K562 (cell line): ENCODE measurements at regions of chr20 and their contacts with region 1.

Region 1: GRCh38 chr20:3218307-3218988 is 9.2 kb downstream of the ITPA start:
- DNase-seq: peak; percentile 70 to 76 (median 74)
- ATAC-seq: peak; percentile 99
- H3K4me3 ChIP-seq: no peak overlapping the region
- H3K27ac ChIP-seq: no peak overlapping the region
- H3K4me1 ChIP-seq: peaks cover 6 to 11% of the 10 kb centered on the region in 2 experiments; a peak in 4 of 5 replicates
- H3K27me3 ChIP-seq: no peaks in the 10 kb centered on the region
- CTCF ChIP-seq: peak; percentile 66 to 88 (median 78)
- EP300 ChIP-seq: no peak
- POLR2A ChIP-seq: no peak
- RAD21 ChIP-seq: peak; percentile 37 to 70; a peak in 3 of 4 replicates

Region 2: DNA sequence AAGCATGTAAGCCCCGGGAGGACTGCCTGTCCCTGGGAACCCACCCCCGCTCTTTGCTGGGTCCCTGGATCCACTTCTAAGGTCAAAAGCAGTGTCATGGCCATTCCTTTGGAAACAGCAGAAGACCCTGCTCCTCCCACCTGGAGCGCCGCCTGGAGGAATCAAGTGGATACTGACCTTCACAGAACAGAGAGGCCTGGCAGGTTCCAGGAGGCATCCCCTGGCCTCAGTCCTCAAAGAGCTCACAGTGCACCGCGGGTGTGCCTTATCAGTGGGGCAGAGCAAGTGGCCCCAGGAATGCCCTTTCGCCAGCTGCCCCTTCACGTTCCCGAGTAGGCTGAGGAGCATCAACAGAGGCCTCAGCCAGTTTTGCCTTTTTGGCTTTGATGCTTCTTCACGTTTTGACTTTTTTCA is 31.6 kb after region 1 on chr20:
- CTCF ChIA-PET with region 1: no interaction called
- POLR2A ChIA-PET with region 1: no interaction called
- in situ Hi-C with region 1: no loop called
- intact Hi-C with region 1: loop called (anchors 1 kb)
- DNase-seq: peak; percentile 47 to 68 (median 60)
- ATAC-seq: peak; percentile 91
- H3K4me3 ChIP-seq: no peak overlapping the region
- H3K27ac ChIP-seq: no peak overlapping the region
- H3K4me1 ChIP-seq: peaks cover 0 to 10% of the 10 kb centered on the region in 2 experiments; a peak in 3 of 5 replicates
- H3K27me3 ChIP-seq: peaks cover 0 to 15% of the 10 kb centered on the region in 2 experiments; a peak in 2 of 5 replicates
- CTCF ChIP-seq: peak; percentile 68 to 75 (median 75)
- EP300 ChIP-seq: no peak
- POLR2A ChIP-seq: no peak
- RAD21 ChIP-seq: peak in 1 of 2 experiments; percentile 52; a peak in 2 of 4 replicates

Region 3: GRCh38 chr20:3276680-3277015 is 58.2 kb after region 1 on chr20:
- CTCF ChIA-PET with region 1: interaction called, 3 read pairs
- POLR2A ChIA-PET with region 1: no interaction called
- in situ Hi-C with region 1: no loop called
- intact Hi-C with region 1: loop called (anchors 2 kb)
- DNase-seq: peak in 3 of 4 experiments; percentile 17 to 58 (median 56)
- ATAC-seq: peak; percentile 95
- H3K4me3 ChIP-seq: no peak overlapping the region
- H3K27ac ChIP-seq: no peak overlapping the region
- H3K4me1 ChIP-seq: no peaks in the 10 kb centered on the region
- H3K27me3 ChIP-seq: no peaks in the 10 kb centered on the region
- CTCF ChIP-seq: peak; percentile 61 to 71 (median 70)
- EP300 ChIP-seq: no peak
- POLR2A ChIP-seq: no peak
- RAD21 ChIP-seq: peak; percentile 30 to 59; a peak in 3 of 4 replicates